CD14-positive monocyte (primary cell): ENCODE measurements at regions of chr6 and their contacts with region 1.

Region 1: DNA sequence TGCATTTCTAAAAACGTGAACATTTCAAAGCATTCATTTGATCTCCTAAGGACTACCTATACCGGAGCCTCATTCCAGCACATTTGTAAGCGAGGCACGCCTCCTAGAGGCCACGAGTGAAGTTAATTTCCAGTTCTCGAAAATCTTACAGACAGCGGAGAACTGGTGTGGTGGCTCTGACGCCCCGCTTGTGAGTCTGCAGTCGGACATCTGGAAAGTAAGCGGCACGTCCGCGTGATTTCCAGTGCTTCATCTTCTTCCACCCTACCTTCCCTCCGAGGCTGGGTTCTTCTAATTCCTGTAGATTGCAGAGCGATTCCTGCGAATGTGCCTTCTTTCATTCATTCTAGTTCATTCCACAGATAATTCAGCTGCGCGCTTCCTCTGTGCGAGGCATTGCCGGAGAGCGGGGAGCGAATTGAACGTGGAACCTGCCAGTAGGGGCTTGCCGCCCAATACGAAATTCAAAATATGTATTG is 810 bp upstream of the PRIM2 start:
- DNase-seq: peak; percentile 62 to 72 (median 72)
- H3K4me3 ChIP-seq: peak overlapping the region; percentile 63 to 93 (median 92)
- H3K4me3 Mint-ChIP-seq: peak overlapping the region; percentile 95 to 98
- H3K27ac ChIP-seq: peak overlapping the region in 1 of 2 donors; percentile 72
- H3K27ac Mint-ChIP-seq: peak overlapping the region; percentile 69 to 93 (median 80)
- H3K4me1 ChIP-seq: peaks cover 6 to 9% of the 10 kb centered on the region in 2 donors
- H3K4me1 Mint-ChIP-seq: peaks cover 19% of the 10 kb centered on the region
- H3K27me3 ChIP-seq: no peaks in the 10 kb centered on the region
- H3K27me3 Mint-ChIP-seq: peaks cover 0 to 7% (median 6%) of the 10 kb centered on the region in 3 donors
- CTCF ChIP-seq: peak; percentile 84

Region 2: DNA sequence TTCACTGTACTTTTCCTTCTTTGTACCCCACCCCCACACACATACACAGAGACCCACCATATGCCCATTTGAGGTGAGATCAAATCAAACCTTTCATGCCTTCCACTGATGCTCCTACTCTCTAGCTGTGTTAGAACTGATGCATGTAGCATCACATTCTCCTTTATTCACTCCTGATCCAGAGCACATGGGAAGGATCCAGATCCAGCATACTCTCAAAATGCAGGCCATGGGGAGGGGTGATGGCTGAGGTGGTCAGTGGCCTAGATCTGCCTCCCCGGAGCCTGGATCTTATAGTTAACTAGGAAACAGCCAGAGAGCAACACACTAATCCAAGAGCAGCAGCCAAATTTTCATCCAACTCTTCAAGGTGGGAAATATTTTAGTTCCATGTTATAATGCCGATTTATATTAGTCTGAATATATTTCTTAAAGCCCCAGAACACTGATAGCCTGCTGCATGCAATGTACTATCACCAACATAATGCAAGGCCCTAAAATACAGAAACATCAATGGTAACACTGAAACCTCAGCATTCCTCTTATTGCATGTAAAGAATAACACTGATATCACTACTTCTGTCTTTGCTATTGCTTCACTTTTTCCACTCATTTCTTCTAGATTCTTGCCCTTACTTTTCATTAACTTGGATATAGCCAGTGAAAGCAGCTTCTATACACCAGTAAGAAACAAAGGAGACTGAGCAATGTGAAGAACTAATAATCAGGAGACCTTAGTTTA is 488.5 kb before region 1 on chr6:
- intact Hi-C with region 1: no loop called
- DNase-seq: no peak
- H3K4me3 ChIP-seq: no peak overlapping the region
- H3K4me3 Mint-ChIP-seq: no peak overlapping the region
- H3K27ac ChIP-seq: no peak overlapping the region
- H3K27ac Mint-ChIP-seq: no peak overlapping the region
- H3K4me1 ChIP-seq: no peaks in the 10 kb centered on the region
- H3K4me1 Mint-ChIP-seq: no peaks in the 10 kb centered on the region
- H3K27me3 ChIP-seq: no peaks in the 10 kb centered on the region
- H3K27me3 Mint-ChIP-seq: peaks cover 0 to 3% (median 0%) of the 10 kb centered on the region in 3 donors
- CTCF ChIP-seq: no peak

Region 3: DNA sequence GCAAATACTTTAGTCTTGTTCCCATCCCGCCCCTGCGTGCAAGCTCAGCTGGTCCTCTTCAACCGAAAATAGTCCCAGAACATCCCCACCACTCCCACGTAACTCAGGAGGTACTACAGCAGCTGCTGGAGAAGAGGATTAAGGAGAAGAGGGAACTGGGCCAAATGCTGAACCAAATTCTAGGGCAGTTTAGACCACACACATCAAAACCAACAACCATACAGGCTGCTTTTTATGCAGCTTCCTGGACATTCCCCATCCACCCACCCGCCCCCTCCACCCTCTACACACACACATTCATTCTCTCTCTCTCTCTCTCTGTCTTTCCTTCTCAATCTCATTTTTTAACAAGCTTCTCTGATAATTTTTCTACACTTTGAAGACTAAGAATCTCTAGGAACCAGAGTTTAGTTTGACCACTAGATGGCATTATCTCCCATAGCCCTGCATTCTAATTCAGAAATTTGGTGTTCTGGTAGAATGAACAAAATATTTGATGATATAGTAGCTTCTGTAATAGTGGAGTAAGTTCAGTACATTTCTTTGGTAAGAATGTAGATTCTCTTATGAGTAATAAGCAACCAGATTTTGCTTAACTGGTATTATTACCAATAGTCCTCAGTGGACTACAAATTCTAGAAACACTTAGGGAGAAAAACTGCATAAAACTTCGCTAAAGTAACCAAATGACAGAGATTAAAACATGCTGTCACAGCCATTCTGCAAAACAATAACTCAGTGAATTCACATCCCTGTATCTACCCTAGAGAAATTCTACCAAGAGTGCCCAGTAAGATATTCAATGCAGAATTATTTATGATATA is 413.8 kb before region 1 on chr6:
- intact Hi-C with region 1: loop called (anchors 5 kb)
- DNase-seq: peak in 2 of 3 donors; percentile 14 to 28
- H3K4me3 ChIP-seq: no peak overlapping the region
- H3K4me3 Mint-ChIP-seq: no peak overlapping the region
- H3K27ac ChIP-seq: no peak overlapping the region
- H3K27ac Mint-ChIP-seq: no peak overlapping the region
- H3K4me1 ChIP-seq: no peaks in the 10 kb centered on the region
- H3K4me1 Mint-ChIP-seq: no peaks in the 10 kb centered on the region
- H3K27me3 ChIP-seq: no peaks in the 10 kb centered on the region
- H3K27me3 Mint-ChIP-seq: peaks cover 0 to 3% (median 0%) of the 10 kb centered on the region in 3 donors
- CTCF ChIP-seq: peak; percentile 69

Region 4: DNA sequence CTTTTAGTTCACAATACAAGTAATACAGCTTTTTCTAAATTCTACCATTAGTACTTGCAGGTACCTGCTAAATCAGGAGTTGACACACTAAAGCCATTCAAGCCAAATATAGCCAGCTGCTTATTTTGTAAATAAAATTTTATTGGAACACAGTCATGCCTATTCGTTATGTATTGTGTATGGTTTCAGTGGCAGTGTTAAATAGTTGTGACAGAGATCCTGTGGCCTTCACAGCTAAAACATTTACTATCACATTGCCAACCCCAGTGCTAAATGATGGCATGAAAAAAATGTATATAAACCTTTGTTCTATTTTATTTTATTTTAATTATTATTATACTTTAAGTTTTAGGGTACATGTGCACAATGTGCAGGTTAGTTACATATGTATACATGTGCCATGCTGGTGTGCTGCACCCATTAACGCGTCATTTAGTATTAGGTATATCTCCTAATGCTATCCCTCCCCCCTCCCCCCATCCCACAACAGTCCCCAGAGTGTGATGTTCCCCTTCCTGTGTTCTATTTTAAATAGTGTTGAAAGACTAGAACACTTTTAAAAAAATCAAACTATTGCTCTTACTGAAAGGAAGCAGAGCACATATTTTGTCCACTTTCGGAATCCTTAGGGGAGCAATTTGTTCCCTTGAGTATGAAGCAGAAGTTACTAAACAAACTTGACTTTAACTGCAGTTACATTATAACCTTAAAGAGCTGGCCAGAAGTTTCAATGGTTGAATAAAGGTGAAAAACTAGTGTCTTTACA is 116.5 kb after region 1 on chr6:
- intact Hi-C with region 1: no loop called
- DNase-seq: no peak
- H3K4me3 ChIP-seq: no peak overlapping the region
- H3K4me3 Mint-ChIP-seq: no peak overlapping the region
- H3K27ac ChIP-seq: peak overlapping the region in 1 of 2 donors; percentile 30
- H3K27ac Mint-ChIP-seq: peak overlapping the region in 1 of 7 donors; percentile 33
- H3K4me1 ChIP-seq: peaks cover 11 to 14% of the 10 kb centered on the region in 2 donors
- H3K4me1 Mint-ChIP-seq: peaks cover 30% of the 10 kb centered on the region
- H3K27me3 ChIP-seq: no peaks in the 10 kb centered on the region
- H3K27me3 Mint-ChIP-seq: no peaks in the 10 kb centered on the region
- CTCF ChIP-seq: no peak